Transverse colon (tissue), 4 donors: ENCODE measurements at regions of chr17 and their contacts with region 1.

Region 1: DNA sequence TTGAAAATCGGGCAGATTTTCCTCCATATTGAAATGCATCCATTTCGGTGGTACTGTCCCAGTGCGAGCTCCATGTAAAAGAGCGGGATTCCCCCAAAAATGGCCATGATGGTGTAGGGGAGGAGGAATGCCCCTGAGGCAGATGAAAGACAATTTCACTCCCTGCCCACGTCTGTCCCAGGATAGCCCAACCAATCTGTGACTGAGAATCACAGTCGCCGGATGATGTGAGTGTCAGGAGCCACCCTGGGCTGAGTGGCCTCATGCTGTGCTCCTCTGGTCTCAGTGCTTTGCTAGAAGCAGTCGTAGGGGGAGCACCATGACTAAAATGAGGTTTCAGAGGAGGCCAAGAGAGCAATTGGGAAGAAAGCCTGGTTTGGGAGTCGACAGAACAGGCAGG is 16.7 kb downstream of the SLC6A4 start:
- DNase-seq: no peak
- H3K4me3 ChIP-seq: no peak overlapping the region
- H3K27ac ChIP-seq: no peak overlapping the region
- H3K4me1 ChIP-seq: no peaks in the 10 kb centered on the region
- H3K27me3 ChIP-seq: no peaks in the 10 kb centered on the region
- CTCF ChIP-seq: no peak
- EP300 ChIP-seq: no peak
- POLR2A ChIP-seq: no peak

Region 2: GRCh38 chr17:29835435-29836351 is 383.1 kb before region 1 on chr17:
- in situ Hi-C with region 1: no loop called
- intact Hi-C with region 1: no loop called
- DNase-seq: peak; percentile 39
- H3K4me3 ChIP-seq: no peak overlapping the region
- H3K27ac ChIP-seq: peak overlapping the region; percentile 40 to 65 (median 57)
- H3K4me1 ChIP-seq: peaks cover 4 to 22% (median 9%) of the 10 kb centered on the region in 4 donors
- H3K27me3 ChIP-seq: no peaks in the 10 kb centered on the region
- CTCF ChIP-seq: peak in 1 of 5 experiments; percentile 11
- EP300 ChIP-seq: no peak
- POLR2A ChIP-seq: no peak

Region 3: DNA sequence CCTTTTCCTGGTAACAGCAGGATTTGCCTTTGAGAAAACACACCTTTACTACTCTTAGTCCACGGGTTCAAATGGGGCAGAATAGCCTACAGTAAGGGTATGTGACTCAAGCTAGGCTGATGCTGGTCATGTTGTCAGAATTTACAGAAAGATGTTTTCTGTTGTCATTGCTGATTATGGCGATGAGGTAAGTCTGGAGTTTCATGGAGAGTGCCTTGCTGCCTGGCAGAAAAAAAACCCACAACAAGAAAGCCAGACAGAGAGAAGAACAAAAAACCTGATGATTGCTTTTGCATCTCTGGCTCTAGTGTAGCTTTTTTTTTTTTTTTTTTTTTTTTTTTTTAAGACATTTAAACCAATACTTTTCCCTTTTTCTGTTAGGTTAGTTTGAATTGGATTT is 31.2 kb before region 1 on chr17:
- in situ Hi-C with region 1: no loop called
- intact Hi-C with region 1: loop called (anchors 2 kb)
- DNase-seq: no peak
- H3K4me3 ChIP-seq: no peak overlapping the region
- H3K27ac ChIP-seq: no peak overlapping the region
- H3K4me1 ChIP-seq: no peaks in the 10 kb centered on the region
- H3K27me3 ChIP-seq: no peaks in the 10 kb centered on the region
- CTCF ChIP-seq: no peak
- EP300 ChIP-seq: no peak
- POLR2A ChIP-seq: no peak